ENCODE measurements at regions of chr3 and their contacts with region 1.

Region 1: GRCh38 chr3:13600941-13601576 is 52.1 kb downstream of the FBLN2 start:
- DNase-seq: peak; percentile 59 to 91
- H3K4me3 ChIP-seq: no peak overlapping the region
- H3K27ac ChIP-seq: peak overlapping the region; percentile 38
- H3K4me1 ChIP-seq: peaks cover 37% of the 10 kb centered on the region
- H3K27me3 ChIP-seq: no peaks in the 10 kb centered on the region
- CTCF ChIP-seq: no peak

Region 2: GRCh38 chr3:13440204-13440817 is 160.7 kb before region 1 on chr3:
- CTCF ChIA-PET with region 1: no interaction called
- POLR2A ChIA-PET with region 1: no interaction called
- intact Hi-C with region 1: no loop called
- DNase-seq: no peak
- H3K4me3 ChIP-seq: no peak overlapping the region
- H3K27ac ChIP-seq: no peak overlapping the region
- H3K4me1 ChIP-seq: no peaks in the 10 kb centered on the region
- H3K27me3 ChIP-seq: no peaks in the 10 kb centered on the region
- CTCF ChIP-seq: no peak

Region 3: DNA sequence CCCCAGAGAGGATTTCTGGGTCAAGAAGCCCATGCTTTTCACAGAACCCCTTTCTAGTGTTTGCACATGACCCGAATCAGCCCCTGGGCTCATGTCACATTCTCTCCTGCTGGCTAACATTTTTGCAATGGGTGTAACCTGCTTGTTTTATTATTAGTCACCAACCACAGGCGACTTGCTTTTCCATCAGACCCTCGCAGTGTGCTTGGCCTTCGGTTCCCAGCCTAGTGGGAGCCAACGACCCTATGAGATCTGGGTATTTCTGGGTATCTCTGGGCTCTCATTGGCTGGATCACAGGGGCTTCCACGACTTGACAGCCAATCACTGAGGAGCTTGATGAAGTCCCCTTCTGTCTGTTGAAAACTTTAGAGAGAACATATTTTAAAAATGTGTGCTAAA is 63.1 kb before region 1 on chr3:
- CTCF ChIA-PET with region 1: no interaction called
- POLR2A ChIA-PET with region 1: no interaction called
- intact Hi-C with region 1: loop called (anchors 2 kb)
- DNase-seq: peak; percentile 80 to 93
- H3K4me3 ChIP-seq: 0 out of 2 replicates have a peak overlapping the region, but pooled peaks have one; percentile 1
- H3K27ac ChIP-seq: peak overlapping the region; percentile 89
- H3K4me1 ChIP-seq: peaks cover 74% of the 10 kb centered on the region
- H3K27me3 ChIP-seq: no peaks in the 10 kb centered on the region
- CTCF ChIP-seq: no peak